GM18951 (cell line): ENCODE measurements at regions of chr2 and their contacts with region 1.

Region 1: DNA sequence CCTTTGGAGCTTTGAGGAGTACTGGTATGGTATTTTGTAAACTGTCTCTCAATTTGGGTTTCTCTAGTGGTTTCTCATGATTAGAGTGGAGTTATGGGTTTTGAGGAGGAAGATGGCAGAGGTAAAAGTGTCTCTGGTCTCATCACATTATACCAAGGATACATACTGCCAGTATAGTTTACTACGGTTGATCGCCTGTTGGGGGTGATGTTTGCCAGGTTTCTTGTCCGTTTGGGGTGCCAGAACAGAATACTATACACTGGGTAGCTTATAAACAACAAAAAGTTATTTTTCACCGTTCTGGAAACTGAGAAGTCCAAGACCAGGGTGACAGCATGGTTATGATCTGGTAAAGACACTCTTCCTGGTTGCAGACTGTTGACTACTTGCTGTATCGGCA is 293.7 kb downstream of the NYAP2 start:
- POLR2A ChIP-seq: no peak

Region 2: DNA sequence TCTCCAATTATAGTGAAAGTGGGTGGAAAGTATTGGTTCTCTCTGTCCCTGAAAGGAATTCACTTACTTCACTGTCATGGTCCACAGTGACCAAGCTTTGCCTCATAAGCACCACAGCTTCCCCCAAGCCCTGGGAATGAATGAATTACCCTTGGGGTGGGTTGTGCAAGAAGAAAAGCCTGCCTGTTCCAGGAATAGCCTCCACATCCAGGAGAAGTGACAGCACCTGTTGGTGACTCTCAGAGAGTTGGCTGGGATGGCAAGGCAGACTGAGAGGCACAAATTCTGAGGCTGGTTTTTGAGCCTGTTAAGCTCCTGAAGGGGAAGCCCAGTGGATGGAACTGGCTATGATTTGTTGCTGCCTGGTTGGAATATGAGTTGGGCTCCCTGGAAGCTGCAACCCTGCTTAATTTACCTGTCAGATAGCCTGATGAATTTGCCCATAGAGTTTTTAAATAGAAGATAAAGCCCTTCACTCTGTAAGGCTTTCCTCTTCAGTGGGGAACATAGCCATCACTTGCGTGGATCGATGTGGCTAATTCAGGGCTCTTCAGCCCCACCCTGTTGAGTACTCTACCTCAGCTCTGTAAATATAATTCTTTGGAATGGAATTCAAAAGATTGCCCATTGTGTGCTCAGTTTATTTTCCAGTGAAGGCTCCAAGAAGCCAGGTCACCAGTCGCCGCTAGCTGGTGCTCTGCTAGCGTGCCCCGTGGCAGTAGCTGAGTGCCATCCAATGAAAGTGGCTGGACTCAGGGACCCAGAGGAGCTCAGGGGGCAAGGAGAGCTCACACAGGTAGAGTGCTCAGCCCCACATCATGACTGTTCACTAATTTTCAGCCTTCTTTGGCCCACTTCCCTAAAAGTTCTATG is 627.1 kb after region 1 on chr2:
- in situ Hi-C with region 1: no loop called
- POLR2A ChIP-seq: no peak

Region 3: GRCh38 chr2:226984750-226985582 is 1291.7 kb after region 1 on chr2:
- in situ Hi-C with region 1: loop called (anchors 25 kb)
- POLR2A ChIP-seq: no peak